ENCODE measurements at regions of chr20 and their contacts with region 1.

Region 1: GRCh38 chr20:32521780-32522525 is 63.2 kb downstream of the NOL4L start:
- DNase-seq: no peak
- ATAC-seq: peak; percentile 76

Region 2: DNA sequence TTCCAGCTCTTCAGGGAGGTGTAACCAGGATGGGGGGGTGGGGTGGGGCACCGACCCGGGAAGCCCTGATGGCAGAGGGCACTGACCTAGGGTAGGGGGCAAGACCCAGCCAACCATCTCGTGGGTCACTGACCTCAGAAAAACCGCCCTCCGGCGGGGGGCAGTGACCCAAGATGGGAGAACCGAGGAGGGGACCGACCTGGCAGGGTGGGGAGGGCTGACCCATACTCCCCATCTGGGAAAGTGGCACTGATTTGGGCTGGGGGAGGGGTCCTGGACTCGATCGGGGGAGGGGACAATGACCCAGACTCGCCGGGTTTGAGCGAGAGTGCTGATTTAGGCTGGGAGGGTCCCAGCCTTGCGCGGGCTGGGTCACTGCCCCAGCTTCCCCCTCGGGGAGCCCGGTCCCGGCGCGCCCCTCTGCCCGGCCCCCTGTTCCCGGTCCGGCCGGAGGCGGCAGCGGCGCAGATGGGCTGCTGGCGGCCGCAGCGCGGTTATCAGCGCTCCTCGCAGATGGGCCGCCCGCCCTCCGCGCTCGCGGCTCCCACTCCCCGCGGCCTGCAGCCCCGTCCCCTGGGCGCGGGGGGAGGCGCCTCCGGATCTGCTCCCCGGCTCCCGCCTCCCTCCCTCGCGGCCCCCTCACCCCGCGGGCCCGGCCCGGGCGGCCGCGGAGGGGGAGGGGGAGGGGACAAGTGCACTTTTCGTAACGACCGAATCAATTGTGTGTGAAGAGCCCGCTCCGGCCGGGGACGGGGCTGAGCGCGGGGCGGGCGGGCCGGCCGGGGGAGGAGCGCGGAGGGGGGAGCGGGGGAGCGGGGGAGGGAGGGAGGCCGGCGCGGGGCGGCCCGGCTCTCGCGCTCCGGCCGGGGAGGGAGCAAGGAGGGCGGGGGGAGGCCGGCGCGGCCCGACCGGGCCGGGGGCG is 61.0 kb after region 1 on chr20:
- intact Hi-C with region 1: loop called (anchors 5 kb)
- DNase-seq: no peak
- ATAC-seq: no peak

Region 3: DNA sequence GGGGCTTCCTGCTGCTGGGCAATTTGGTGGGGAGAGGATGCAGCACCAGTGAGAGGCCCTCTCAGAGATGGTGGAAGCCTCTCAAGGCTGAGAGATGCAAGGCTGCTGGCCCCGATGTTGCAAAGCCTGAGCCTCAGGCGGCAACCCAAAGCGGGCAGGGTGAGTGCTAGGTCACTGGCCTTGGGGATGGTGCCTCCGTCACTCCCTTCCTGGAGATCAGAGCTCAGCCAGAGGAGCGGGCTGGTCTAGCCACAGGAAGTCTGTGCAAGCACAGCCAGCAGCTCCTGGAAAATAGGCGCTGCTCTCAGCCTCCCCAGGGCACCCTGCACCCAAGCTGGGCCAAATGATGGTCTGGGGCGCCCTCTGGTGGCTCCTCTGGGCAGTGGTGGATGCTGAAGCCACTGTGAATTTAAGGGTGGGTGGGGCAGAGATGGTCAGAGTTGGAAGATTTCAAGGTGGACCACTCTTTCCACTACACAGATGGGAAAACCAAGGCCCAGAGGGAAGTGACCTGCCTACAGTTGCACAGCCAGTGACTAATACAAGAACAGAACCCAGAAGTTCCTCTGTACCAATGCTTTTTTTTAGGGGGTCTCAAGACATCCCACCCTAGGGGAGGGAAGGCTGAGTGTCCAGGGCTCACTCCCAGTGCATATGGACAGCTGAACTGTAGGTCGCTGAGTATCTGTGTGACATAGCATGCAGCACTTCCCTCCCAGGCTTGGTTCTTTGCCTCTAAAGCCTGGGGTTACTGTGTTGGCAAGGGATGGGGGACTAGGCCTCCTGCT is 131.0 kb after region 1 on chr20:
- intact Hi-C with region 1: loop called (anchors 1 kb)
- DNase-seq: peak; percentile 90
- ATAC-seq: peak; percentile 96

Measured in Right ventricle myocardium inferior (tissue), 1 donor.